WTC11 (cell line): ENCODE measurements at regions of chr16 and their contacts with region 1.

Region 1: GRCh38 chr16:68279791-68280558 is 15.6 kb downstream of the SLC7A6 start:
- DNase-seq: no peak
- ATAC-seq: no peak
- H3K4me3 Mint-ChIP-seq: no peak overlapping the region
- H3K27ac Mint-ChIP-seq: no peak overlapping the region
- H3K4me1 Mint-ChIP-seq: peaks cover 3% of the 10 kb centered on the region; the same call in 1 of the 2 replicates
- H3K27me3 Mint-ChIP-seq: no peaks in the 10 kb centered on the region
- CTCF ChIP-seq: no peak

Region 2: DNA sequence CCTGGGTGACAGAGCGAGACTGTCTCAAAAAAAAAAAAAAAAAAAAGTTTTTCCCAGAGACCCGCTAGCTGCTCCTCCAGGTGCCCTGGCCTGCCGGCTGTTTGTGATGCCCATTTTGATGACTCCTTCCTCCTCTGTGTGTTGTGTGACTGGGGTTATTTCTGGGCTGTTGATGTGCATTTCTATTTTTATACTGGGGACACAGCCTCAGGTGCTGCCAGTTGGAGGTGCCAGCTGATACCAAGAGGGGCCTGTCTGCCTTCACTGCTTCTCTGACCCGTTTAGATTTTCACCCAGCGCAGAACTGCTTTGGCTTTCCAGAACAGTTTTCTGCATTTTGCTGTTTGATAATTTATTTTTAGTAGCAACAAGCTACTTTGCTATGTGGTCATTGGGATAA is 28.1 kb before region 1 on chr16:
- CTCF ChIA-PET with region 1: no interaction called
- POLR2A ChIA-PET with region 1: interaction called, 10 read pairs
- DNase-seq: no peak
- ATAC-seq: no peak
- H3K4me3 Mint-ChIP-seq: no peak overlapping the region
- H3K27ac Mint-ChIP-seq: no peak overlapping the region
- H3K4me1 Mint-ChIP-seq: no peaks in the 10 kb centered on the region
- H3K27me3 Mint-ChIP-seq: no peaks in the 10 kb centered on the region
- CTCF ChIP-seq: no peak